ENCODE measurements at regions of chr3 and their contacts with region 1.

Region 1: DNA sequence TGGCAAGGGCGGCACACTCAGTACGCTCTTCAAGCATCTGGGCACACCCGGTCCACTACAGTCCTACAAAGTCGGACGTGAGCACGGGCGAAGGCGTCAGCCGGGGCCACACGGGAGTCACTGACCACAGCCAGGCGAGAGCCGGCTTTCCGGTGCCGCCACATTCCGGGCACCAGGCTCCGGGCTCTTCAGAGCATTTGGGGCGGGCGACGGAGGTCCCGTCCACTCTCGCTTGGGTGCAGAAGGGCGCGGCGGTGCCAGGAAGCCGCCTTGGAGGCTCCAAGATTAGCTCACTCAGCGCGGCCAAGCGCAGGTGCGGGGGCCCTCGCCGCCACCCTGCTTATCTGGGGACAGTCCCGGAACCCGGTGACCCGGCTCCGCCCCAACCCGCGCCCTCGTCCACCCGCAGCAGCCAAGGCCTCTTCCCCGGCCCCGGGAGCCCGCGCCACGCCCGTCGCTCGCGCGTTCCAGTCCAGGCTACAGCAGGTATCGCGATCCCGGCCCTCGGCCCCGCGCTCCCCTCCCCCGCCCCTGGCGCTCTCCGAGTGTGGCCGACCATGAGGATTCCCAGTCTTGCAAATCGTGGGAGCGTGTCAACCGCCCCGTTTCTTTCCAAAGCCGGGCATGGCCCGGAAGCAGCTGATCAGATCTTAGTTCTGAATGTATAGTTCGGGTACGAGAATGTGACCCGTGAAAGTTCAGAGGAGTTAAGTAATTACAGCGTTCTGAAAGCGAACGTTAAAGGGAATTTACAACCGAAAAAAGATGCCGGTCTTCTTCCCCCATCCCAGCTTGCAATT is at the start of gene ADPRH:
- DNase-seq: peak; percentile 89
- H3K4me3 ChIP-seq: peak within 1 kb of the TSS; percentile 72
- H3K27ac ChIP-seq: peak within 1 kb of the TSS; percentile 97
- H3K4me1 ChIP-seq: peaks cover 25% of the 10 kb centered on the region
- H3K27me3 ChIP-seq: no peaks in the 10 kb centered on the region
- CTCF ChIP-seq: no peak
- total RNA-seq, gene ADPRH: 9.8 TPM

Region 2: GRCh38 chr3:119352849-119353502 is 226.6 kb before region 1 on chr3:
- intact Hi-C with region 1: no loop called
- DNase-seq: no peak
- H3K4me3 ChIP-seq: no peak overlapping the region
- H3K27ac ChIP-seq: peak overlapping the region; percentile 83
- H3K4me1 ChIP-seq: peaks cover 80% of the 10 kb centered on the region
- H3K27me3 ChIP-seq: no peaks in the 10 kb centered on the region
- CTCF ChIP-seq: peak; percentile 52

Region 3: DNA sequence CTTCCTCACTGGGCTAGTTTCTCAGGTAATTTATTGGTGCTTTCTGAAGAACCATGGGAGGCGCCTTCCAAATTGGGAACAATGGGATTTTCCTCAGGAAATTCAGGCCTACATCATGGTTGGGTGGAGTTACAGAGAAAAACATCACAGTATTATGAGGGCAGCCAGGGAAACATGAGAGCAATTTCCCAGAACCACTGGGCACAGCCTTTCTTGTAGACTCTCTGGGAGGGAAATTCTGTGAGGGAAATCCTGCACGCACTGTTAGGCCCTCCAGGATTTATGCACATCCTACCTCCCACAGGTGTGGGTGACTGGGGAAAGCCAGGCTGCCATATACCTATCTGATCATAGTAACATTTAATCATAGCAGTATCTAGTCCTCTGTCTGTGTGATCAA is 67.6 kb after region 1 on chr3:
- intact Hi-C with region 1: loop called (anchors 5 kb)
- DNase-seq: no peak
- H3K4me3 ChIP-seq: peak overlapping the region; percentile 71
- H3K27ac ChIP-seq: peak overlapping the region; percentile 94
- H3K4me1 ChIP-seq: peaks cover 100% of the 10 kb centered on the region
- H3K27me3 ChIP-seq: no peaks in the 10 kb centered on the region
- CTCF ChIP-seq: no peak

Region 4: DNA sequence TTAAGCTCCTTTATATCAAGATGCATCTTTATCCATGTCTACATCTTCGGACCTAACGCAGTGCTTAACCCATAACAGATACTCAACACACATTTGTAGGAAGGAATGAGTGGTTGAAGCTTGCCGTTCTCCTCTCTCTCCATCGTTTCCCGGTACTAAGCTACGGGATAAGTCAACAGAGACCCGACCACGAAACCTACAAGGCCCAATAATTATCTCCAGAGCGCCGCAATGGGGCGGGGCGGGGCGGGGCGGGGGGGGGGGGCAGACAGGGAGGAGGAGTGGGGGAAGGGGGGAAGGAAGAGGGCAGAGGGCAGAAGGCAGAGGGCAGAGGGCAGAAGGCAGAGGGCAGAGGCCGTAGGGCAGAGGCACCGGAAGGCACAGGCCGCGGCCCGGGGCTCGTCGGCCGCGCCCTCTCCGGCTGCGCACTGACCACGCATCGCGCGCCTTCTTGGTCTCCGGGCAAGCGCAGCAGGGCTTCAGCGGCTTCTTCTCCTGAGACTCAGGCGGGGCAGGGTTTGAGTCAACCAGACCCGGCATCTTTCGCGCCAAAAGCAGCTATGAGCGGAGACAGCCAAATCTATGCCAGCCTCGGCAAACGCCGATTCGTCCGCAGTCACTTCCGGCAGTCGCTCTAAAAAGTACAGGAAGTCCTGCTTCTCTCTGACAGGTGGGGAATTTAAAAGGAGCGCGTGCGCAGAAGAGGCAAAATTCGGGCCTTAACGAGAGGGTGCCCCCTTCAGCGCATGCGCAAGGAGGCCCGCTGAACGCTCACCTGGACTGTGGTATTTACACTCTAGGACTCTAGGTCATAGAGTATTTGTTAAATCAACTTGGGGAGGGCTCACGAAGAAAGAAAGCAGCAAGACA is 97.4 kb after region 1 on chr3 and contains the start of gene COX17:
- intact Hi-C with region 1: loop called (anchors 10 kb)
- DNase-seq: peak; percentile 93
- H3K4me3 ChIP-seq: peak within 1 kb of the TSS; percentile 80
- H3K27ac ChIP-seq: peak within 1 kb of the TSS; percentile 98
- H3K4me1 ChIP-seq: peaks cover 55% of the 10 kb centered on the region
- H3K27me3 ChIP-seq: no peaks in the 10 kb centered on the region
- CTCF ChIP-seq: no peak
- total RNA-seq, gene COX17: 165 TPM

Measured in left ventricle myocardium inferior (tissue), 1 donor.